CD8-positive, alpha-beta T cell (primary cell): ENCODE measurements at regions of chr11 and their contacts with region 1.

Region 1: DNA sequence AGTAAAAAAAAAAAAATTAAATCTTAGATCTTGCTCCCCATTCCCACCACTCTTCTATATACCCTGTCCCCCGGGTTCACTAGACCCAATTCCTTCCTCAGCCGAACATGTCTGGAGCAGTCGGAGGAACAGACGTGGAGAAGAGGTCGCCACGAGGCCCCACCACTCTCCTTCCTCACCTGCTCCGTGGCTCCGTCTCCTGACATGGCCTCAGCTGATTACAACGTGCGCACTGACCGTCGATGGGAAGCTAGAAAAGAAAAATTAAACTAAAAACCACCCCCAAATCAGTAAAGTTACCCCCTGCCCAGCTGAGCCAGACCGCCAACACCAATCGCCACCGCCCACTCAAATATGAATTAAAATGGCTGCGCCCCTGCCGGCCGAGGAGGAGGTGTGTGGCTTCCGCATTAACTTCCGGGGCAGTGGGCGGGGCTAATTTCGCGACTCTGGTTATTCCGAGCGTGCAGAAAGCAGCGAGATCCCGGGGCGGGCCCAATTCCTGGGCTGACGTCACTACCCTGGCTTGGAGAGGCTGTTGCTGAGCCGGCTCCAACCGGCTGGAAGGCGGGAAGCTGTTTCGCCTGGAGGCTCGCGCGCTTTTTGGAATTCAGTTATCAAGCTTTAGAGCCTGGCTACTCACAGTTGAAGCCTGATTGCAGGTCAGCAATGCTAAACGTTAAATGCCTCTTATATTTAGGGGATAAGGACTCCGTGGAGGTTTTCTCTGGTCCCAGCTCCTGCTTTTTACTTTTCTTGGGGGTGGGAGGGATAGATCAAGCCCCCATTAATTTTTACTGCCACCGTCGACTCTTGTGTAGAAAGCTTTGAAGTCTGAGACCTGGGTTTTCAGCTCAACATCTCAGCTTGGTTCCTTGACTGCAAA is at the start of gene CSTF3:
- DNase-seq: peak; percentile 85 to 98 (median 94)
- ATAC-seq: peak; percentile 94
- H3K4me3 ChIP-seq: peak within 1 kb of the TSS; percentile 73 to 79
- H3K4me3 Mint-ChIP-seq: peak within 1 kb of the TSS; percentile 99
- H3K27ac ChIP-seq: peak within 1 kb of the TSS; percentile 77 to 89
- H3K27ac Mint-ChIP-seq: peak within 1 kb of the TSS; percentile 96
- H3K4me1 ChIP-seq: peaks cover 35% of the 10 kb centered on the region
- H3K4me1 Mint-ChIP-seq: peaks cover 47% of the 10 kb centered on the region
- H3K27me3 ChIP-seq: no peaks in the 10 kb centered on the region
- H3K27me3 Mint-ChIP-seq: no peaks in the 10 kb centered on the region
- CTCF ChIP-seq: no peak
- total RNA-seq, gene CSTF3: 7.0 to 7.9 TPM

Region 2: GRCh38 chr11:32583459-32584271 is 577.7 kb before region 1 on chr11 and contains the start of gene EIF3M:
- CTCF ChIA-PET with region 1: no interaction called
- POLR2A ChIA-PET with region 1: interaction called, 3 read pairs
- intact Hi-C with region 1: loop called (anchors 1 to 2 kb)
- DNase-seq: peak; percentile 91 to 98 (median 95)
- ATAC-seq: peak; percentile 98
- H3K4me3 ChIP-seq: peak within 1 kb of the TSS; percentile 80 to 93
- H3K4me3 Mint-ChIP-seq: peak within 1 kb of the TSS; percentile 99
- H3K27ac ChIP-seq: peak within 1 kb of the TSS; percentile 81 to 86
- H3K27ac Mint-ChIP-seq: peak within 1 kb of the TSS; percentile 99
- H3K4me1 ChIP-seq: peaks cover 29% of the 10 kb centered on the region
- H3K4me1 Mint-ChIP-seq: peaks cover 39% of the 10 kb centered on the region
- H3K27me3 ChIP-seq: no peaks in the 10 kb centered on the region
- H3K27me3 Mint-ChIP-seq: no peaks in the 10 kb centered on the region
- CTCF ChIP-seq: no peak
- total RNA-seq, gene EIF3M: 269 to 274 TPM

Region 3: GRCh38 chr11:32960553-32961164 is 200.7 kb before region 1 on chr11:
- CTCF ChIA-PET with region 1: no interaction called
- POLR2A ChIA-PET with region 1: no interaction called
- intact Hi-C with region 1: loop called in 1 of 2 experiments (anchors 5 kb)
- DNase-seq: peak in 2 of 9 experiments; percentile 62 to 69
- ATAC-seq: peak; percentile 46
- H3K4me3 ChIP-seq: no peak overlapping the region
- H3K4me3 Mint-ChIP-seq: no peak overlapping the region
- H3K27ac ChIP-seq: no peak overlapping the region
- H3K27ac Mint-ChIP-seq: no peak overlapping the region
- H3K4me1 ChIP-seq: no peaks in the 10 kb centered on the region
- H3K4me1 Mint-ChIP-seq: no peaks in the 10 kb centered on the region
- H3K27me3 ChIP-seq: no peaks in the 10 kb centered on the region
- H3K27me3 Mint-ChIP-seq: no peaks in the 10 kb centered on the region
- CTCF ChIP-seq: peak; percentile 78

Region 4: GRCh38 chr11:33039274-33040032 is 121.9 kb before region 1 on chr11 and contains the start of gene TCP11L1:
- CTCF ChIA-PET with region 1: no interaction called
- POLR2A ChIA-PET with region 1: interaction called, 5 read pairs
- intact Hi-C with region 1: loop called (anchors 1 to 5 kb)
- DNase-seq: peak; percentile 60 to 89 (median 83)
- ATAC-seq: peak; percentile 81
- H3K4me3 ChIP-seq: peak within 1 kb of the TSS; percentile 98
- H3K4me3 Mint-ChIP-seq: peak within 1 kb of the TSS; percentile 95
- H3K27ac ChIP-seq: peak within 1 kb of the TSS; percentile 71 to 86
- H3K27ac Mint-ChIP-seq: peak within 1 kb of the TSS; percentile 91
- H3K4me1 ChIP-seq: peaks cover 10% of the 10 kb centered on the region
- H3K4me1 Mint-ChIP-seq: peaks cover 20% of the 10 kb centered on the region
- H3K27me3 ChIP-seq: no peaks in the 10 kb centered on the region
- H3K27me3 Mint-ChIP-seq: no peaks in the 10 kb centered on the region
- CTCF ChIP-seq: no peak
- total RNA-seq, gene TCP11L1: 10.9 to 12.3 TPM

Region 5: GRCh38 chr11:33147559-33147958 is 13.8 kb before region 1 on chr11:
- CTCF ChIA-PET with region 1: no interaction called
- POLR2A ChIA-PET with region 1: no interaction called
- intact Hi-C with region 1: no loop called
- DNase-seq: no peak
- ATAC-seq: no peak
- H3K4me3 ChIP-seq: no peak overlapping the region
- H3K4me3 Mint-ChIP-seq: no peak overlapping the region
- H3K27ac ChIP-seq: no peak overlapping the region
- H3K27ac Mint-ChIP-seq: no peak overlapping the region
- H3K4me1 ChIP-seq: no peaks in the 10 kb centered on the region
- H3K4me1 Mint-ChIP-seq: peaks cover 29% of the 10 kb centered on the region
- H3K27me3 ChIP-seq: no peaks in the 10 kb centered on the region
- H3K27me3 Mint-ChIP-seq: no peaks in the 10 kb centered on the region
- CTCF ChIP-seq: no peak

Region 6: GRCh38 chr11:33172996-33173395 is 11.6 kb after region 1 on chr11:
- CTCF ChIA-PET with region 1: no interaction called
- POLR2A ChIA-PET with region 1: no interaction called
- intact Hi-C with region 1: no loop called
- DNase-seq: no peak
- ATAC-seq: no peak
- H3K4me3 ChIP-seq: no peak overlapping the region
- H3K4me3 Mint-ChIP-seq: no peak overlapping the region
- H3K27ac ChIP-seq: no peak overlapping the region
- H3K27ac Mint-ChIP-seq: no peak overlapping the region
- H3K4me1 ChIP-seq: no peaks in the 10 kb centered on the region
- H3K4me1 Mint-ChIP-seq: no peaks in the 10 kb centered on the region
- H3K27me3 ChIP-seq: no peaks in the 10 kb centered on the region
- H3K27me3 Mint-ChIP-seq: no peaks in the 10 kb centered on the region
- CTCF ChIP-seq: no peak

Region 7: GRCh38 chr11:33329705-33330329 is 168.5 kb after region 1 on chr11:
- CTCF ChIA-PET with region 1: interaction called, 51 read pairs
- POLR2A ChIA-PET with region 1: interaction called, 3 read pairs
- intact Hi-C with region 1: loop called (anchors 1 kb)
- DNase-seq: peak in 8 of 9 experiments; percentile 21 to 73 (median 41)
- ATAC-seq: peak; percentile 58
- H3K4me3 ChIP-seq: no peak overlapping the region
- H3K4me3 Mint-ChIP-seq: no peak overlapping the region
- H3K27ac ChIP-seq: no peak overlapping the region
- H3K27ac Mint-ChIP-seq: no peak overlapping the region
- H3K4me1 ChIP-seq: no peaks in the 10 kb centered on the region
- H3K4me1 Mint-ChIP-seq: peaks cover 31% of the 10 kb centered on the region
- H3K27me3 ChIP-seq: no peaks in the 10 kb centered on the region
- H3K27me3 Mint-ChIP-seq: no peaks in the 10 kb centered on the region
- CTCF ChIP-seq: peak; percentile 70

Region 8: DNA sequence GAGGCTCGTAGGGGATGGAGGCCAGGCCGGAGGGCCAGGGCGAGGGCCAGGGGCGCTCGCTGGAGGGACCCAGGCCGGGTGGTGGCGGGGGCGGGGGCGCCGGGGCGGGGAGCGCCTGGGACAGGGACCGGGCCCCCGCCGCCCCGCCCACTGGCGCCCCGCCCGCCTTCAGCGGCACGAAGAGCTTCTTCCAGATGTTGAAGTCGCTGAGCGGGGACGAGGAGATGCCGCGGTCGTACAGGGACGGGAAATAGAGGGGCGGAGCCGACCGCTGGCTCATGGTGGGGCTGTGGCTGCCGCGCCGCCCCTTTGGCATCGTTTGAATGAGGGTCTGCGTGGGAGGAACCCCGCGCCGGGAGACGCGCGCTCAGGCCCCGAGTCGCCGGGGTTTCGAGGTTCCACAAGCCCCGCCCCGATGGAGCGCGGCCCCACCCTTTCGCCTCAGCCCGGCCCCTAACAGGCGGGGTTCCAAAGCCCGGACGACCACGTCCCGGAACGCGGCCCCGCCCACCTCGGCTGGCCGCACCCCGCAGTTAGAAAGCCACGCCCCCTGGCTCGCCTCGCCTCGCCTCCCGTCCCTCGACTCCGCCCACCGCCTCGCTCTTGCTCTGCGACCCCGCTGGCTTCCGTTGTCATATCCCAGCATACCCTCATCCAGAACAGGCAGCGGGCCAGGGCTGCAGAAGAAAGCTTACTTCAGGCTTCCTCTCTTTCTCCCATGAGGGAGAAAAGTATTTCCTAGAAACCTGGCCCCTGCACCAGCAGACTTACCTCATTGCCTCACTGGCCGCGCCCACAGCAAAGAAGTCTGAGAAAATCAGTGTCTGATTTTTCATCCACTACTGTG is 539.3 kb after region 1 on chr11 and contains the start of gene C11orf91:
- CTCF ChIA-PET with region 1: no interaction called
- POLR2A ChIA-PET with region 1: no interaction called
- intact Hi-C with region 1: loop called in 1 of 2 experiments (anchors 1 kb)
- DNase-seq: peak; percentile 88 to 96 (median 94)
- ATAC-seq: peak; percentile 95
- H3K4me3 ChIP-seq: peak within 1 kb of the TSS; percentile 51 to 68
- H3K4me3 Mint-ChIP-seq: peak within 1 kb of the TSS; percentile 92
- H3K27ac ChIP-seq: no peak within 1 kb of the TSS
- H3K27ac Mint-ChIP-seq: peak within 1 kb of the TSS; percentile 64
- H3K4me1 ChIP-seq: peaks cover 13% of the 10 kb centered on the region
- H3K4me1 Mint-ChIP-seq: peaks cover 25% of the 10 kb centered on the region
- H3K27me3 ChIP-seq: no peaks in the 10 kb centered on the region
- H3K27me3 Mint-ChIP-seq: peaks cover 2% of the 10 kb centered on the region
- CTCF ChIP-seq: no peak
- total RNA-seq, gene C11orf91: 0.54 TPM in 1 of 2 experiments, not detected in the other

Region 9: DNA sequence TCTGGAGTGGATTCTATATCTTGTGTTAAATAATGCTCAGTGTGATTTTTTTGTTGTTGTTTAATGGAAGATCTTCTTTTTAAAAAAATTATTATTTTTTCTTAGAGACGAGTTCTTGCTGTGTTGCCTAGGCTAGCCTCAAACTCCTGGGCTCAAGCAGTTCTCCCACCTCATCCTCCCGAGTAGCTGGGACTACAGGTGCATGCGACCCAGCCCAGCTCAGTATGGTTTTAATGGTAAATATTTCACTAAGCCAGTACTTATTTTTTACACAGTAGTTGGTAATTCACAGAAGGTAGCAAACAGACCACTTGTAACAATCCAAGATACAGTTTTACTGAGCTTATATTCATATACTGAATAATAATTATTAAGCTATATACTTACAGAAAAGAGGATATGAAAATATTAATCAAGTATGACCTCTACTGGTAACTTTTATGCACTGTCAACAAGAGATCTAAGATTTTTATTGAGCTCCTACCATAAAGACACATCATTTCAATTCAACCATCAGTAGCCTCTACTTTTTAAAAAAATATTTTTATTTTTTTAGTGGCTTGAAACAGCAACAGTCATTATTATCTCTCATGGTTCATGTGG is 581.0 kb after region 1 on chr11:
- CTCF ChIA-PET with region 1: interaction called, 4 read pairs
- POLR2A ChIA-PET with region 1: no interaction called
- intact Hi-C with region 1: loop called in 1 of 2 experiments (anchors 2 kb)
- DNase-seq: peak in 2 of 9 experiments; percentile 39 to 55
- ATAC-seq: peak; percentile 44
- H3K4me3 ChIP-seq: no peak overlapping the region
- H3K4me3 Mint-ChIP-seq: no peak overlapping the region
- H3K27ac ChIP-seq: no peak overlapping the region
- H3K27ac Mint-ChIP-seq: no peak overlapping the region
- H3K4me1 ChIP-seq: no peaks in the 10 kb centered on the region
- H3K4me1 Mint-ChIP-seq: no peaks in the 10 kb centered on the region
- H3K27me3 ChIP-seq: no peaks in the 10 kb centered on the region
- H3K27me3 Mint-ChIP-seq: no peaks in the 10 kb centered on the region
- CTCF ChIP-seq: peak; percentile 63